PC-9 (cell line): ENCODE measurements at regions of chr15 and their contacts with region 1.

Region 1: DNA sequence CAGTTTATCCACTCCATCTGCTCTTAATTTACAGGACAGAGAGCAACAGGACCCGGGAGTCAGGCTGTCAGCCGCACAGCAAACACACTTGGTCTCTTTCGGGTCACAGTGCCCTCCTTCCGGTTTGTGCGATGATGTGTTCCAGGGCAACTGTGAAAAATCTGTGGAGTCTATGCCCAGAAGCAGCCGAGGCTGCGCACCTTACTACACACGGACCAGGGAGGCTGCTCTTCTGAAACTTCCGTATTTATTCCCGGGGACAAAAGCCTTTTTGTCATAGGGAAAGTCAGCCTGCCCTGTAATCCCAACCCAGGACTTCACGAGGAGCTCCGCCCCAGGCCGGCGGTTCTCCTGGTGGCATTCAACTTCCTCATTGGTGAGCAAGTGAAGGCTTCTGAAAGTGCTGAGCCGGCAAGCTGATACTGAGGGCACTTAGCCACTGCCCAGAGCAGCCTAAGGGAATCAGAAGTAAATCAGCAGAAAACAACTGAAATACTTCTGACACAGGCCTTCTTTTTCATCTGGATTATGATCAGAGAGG is 126.5 kb downstream of the FMN1 start:
- DNase-seq: peak; percentile 69 to 83
- H3K4me3 ChIP-seq: peak overlapping the region; percentile 70
- H3K27ac ChIP-seq: peak overlapping the region; percentile 96
- H3K4me1 ChIP-seq: peaks cover 44% of the 10 kb centered on the region
- H3K27me3 ChIP-seq: no peaks in the 10 kb centered on the region
- CTCF ChIP-seq: no peak

Region 2: DNA sequence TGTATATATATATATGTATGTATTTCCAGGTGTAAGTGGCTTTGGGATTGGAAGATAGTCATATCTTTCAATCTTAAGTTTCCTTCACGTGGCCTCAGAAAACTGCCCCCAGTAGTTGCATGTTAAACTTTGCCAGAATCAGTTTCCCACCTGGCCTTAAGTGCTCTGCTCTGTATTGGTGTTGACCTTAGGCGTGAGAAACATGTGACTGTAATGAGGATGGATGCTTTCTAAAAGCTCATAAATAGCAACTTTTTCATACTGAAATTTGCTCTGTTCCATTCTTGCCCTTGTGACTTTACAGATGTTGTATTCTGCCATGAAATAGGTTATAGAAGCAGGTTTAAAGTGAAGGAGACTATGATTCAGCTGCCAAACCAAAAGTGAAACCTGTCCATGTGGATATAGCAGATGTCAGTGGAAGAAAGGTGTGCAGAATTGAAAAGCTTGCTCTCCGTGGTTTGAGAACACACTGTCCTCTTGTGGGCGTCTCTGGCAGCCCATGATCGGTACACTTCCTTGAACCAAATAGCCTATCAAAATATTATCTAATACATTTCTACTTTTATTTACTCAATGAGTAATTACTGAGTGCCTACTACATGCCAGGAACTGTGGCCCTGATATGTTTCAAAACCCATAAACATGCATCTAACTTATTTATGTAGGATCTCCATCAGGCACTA is 410.7 kb before region 1 on chr15:
- CTCF ChIA-PET with region 1: no interaction called
- POLR2A ChIA-PET with region 1: interaction called, 3 read pairs
- intact Hi-C with region 1: loop called (anchors 5 kb)
- DNase-seq: peak in 1 of 2 experiments; percentile 21
- H3K4me3 ChIP-seq: no peak overlapping the region
- H3K27ac ChIP-seq: no peak overlapping the region
- H3K4me1 ChIP-seq: peaks cover 19% of the 10 kb centered on the region
- H3K27me3 ChIP-seq: no peaks in the 10 kb centered on the region
- CTCF ChIP-seq: no peak

Region 3: DNA sequence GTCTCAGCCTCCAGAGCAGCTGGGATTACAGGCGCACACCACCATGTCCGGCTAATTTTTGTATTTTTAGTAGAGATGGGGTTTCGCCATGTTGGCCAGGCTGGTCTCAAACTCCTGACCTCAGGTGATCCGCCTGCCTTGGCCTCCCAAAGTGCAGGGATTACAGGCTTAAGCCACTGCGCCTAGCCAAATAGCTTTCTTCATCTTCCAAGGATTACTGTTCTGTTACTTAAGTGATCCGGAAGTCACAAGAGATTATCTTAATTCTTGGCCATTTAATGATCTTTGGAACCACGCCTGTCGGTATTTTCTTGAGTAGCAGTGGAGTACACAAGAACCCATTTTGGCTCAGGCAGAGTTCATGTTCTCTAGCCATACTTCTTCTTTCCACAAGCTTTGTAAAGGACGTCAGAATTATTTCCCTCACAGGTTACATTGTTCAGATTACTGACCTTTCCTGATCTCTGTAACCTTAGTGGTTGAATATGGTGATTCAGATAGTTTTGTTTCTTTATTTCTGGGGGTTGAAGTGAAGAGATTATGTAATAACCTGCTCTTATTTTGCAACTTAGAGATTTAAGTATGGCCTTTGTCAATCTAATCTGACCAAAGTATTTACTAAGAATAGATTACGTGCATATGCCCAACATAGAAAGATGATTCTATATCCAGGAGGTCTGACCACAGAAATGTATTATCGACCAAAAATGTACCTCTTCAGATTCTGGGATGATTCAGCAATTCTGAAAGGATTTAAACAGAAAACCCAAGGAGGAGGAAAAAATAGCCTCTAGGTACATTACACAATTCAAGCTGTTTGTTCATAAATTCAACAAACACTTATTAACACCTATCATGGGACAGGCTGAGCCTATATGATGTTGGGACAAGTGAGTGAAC is 218.0 kb before region 1 on chr15:
- CTCF ChIA-PET with region 1: no interaction called
- POLR2A ChIA-PET with region 1: no interaction called
- intact Hi-C with region 1: loop called (anchors 5 kb)
- DNase-seq: peak in 1 of 2 experiments; percentile 96
- H3K4me3 ChIP-seq: no peak overlapping the region
- H3K27ac ChIP-seq: peak overlapping the region; percentile 91
- H3K4me1 ChIP-seq: peaks cover 46% of the 10 kb centered on the region
- H3K27me3 ChIP-seq: no peaks in the 10 kb centered on the region
- CTCF ChIP-seq: no peak

Region 4: GRCh38 chr15:33013827-33014445 is 54.1 kb before region 1 on chr15:
- CTCF ChIA-PET with region 1: no interaction called
- POLR2A ChIA-PET with region 1: no interaction called
- intact Hi-C with region 1: loop called (anchors 2 kb)
- DNase-seq: peak; percentile 56 to 93
- H3K4me3 ChIP-seq: no peak overlapping the region
- H3K27ac ChIP-seq: peak overlapping the region; percentile 71
- H3K4me1 ChIP-seq: peaks cover 23% of the 10 kb centered on the region
- H3K27me3 ChIP-seq: no peaks in the 10 kb centered on the region
- CTCF ChIP-seq: no peak

Region 5: DNA sequence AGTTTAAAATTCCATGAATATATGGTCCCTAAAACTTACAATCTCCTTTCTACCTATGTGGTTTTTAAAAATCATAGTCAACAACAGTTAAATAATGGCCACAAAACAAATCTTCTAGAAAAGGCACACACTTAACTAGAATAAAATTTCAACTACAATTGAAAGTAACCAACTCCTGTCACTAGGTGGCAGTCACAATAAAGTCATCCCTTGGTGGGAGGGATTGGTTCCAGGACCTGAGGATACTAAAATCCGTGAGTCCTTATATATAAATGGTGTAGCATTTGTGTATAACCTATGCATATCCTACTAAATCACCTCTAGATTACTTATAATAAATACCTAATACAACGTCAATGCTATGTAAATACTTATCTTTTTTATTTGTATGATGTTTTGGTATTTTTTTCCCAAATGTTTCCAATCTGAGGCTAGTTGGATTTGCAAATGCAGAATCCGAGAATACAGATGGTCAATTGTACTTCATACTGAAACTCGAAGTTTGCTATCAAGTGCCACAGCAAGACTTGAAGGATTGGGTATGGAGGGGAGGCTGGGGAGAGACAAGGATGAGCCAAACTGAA is 46.1 kb before region 1 on chr15:
- CTCF ChIA-PET with region 1: interaction called, 5 read pairs
- POLR2A ChIA-PET with region 1: no interaction called
- intact Hi-C with region 1: loop called (anchors 1 kb)
- DNase-seq: no peak
- H3K4me3 ChIP-seq: no peak overlapping the region
- H3K27ac ChIP-seq: peak overlapping the region; percentile 43
- H3K4me1 ChIP-seq: peaks cover 13% of the 10 kb centered on the region
- H3K27me3 ChIP-seq: no peaks in the 10 kb centered on the region
- CTCF ChIP-seq: peak; percentile 66

Region 6: DNA sequence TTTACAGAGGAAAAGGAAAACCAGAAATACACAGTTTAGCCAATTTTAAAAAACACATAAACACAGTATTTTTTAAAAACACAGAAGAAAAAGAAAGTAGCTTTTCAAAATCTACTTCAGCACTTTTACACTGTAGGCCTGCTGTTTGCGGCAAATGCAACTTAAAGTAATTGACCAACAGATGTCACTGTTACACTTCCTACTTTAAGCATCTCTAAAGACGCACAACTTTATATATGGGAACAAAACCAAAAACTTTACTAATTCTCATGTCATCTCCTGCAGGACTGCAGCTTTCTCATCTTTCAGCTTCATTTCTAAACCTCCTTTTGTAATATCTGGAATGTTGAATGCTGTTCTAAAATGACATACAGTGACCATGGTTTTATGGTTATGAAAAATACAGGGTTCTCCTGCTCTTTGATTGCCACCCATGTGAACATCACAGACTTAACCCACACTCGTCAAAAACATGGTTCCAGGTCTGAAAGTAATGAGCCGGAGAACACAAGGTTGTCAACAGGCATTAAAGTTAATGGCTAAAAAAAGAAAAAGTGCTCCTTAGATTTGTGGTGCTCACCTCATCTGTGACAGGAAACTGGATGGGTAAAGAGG is 18.6 kb after region 1 on chr15:
- CTCF ChIA-PET with region 1: interaction called, 4 read pairs
- POLR2A ChIA-PET with region 1: interaction called, 7 read pairs
- intact Hi-C with region 1: loop called (anchors 1 kb)
- DNase-seq: peak in 1 of 2 experiments; percentile 51
- H3K4me3 ChIP-seq: no peak overlapping the region
- H3K27ac ChIP-seq: no peak overlapping the region
- H3K4me1 ChIP-seq: peaks cover 42% of the 10 kb centered on the region
- H3K27me3 ChIP-seq: no peaks in the 10 kb centered on the region
- CTCF ChIP-seq: peak; percentile 64

Region 7: DNA sequence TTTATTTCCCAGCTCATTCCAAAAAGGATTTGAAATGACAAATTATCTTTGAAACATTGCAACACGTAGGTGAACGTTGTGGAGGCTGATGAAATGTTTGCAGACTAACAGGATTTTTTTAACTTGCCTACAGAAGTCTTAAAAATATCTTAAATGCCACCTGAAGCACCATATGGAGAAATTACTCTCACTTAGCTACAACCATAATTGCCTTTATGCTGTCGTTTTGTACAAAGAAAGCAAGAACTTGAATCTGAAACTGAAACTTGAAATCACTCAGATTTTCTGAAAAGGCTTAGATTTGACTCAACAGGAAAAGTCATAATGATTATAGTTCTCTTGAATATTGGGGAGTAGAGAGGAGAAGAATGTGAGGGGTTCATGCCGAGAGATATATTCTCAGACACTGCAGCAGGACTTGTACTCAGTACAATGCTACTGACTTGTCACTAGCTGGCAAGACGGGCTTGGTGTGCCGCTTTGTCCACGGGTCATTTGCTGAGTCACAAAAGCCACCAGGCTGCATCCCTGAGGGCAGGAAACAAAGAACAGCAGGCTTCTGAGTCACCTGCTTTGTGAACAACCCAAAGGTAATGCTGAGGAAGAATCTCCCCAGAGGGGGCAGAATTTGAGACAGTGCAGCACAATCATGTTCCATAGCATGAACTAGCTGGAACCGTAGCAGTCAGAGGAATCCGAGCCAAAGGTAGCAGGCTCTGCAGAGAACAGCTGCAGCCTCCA is 133.7 kb after region 1 on chr15:
- CTCF ChIA-PET with region 1: no interaction called
- POLR2A ChIA-PET with region 1: no interaction called
- intact Hi-C with region 1: loop called (anchors 5 kb)
- DNase-seq: peak; percentile 89 to 96
- H3K4me3 ChIP-seq: peak overlapping the region; percentile 53
- H3K27ac ChIP-seq: peak overlapping the region; percentile 99
- H3K4me1 ChIP-seq: peaks cover 41% of the 10 kb centered on the region
- H3K27me3 ChIP-seq: no peaks in the 10 kb centered on the region
- CTCF ChIP-seq: peak; percentile 58